ENCODE measurements at regions of chr6 and their contacts with region 1.

Region 1: DNA sequence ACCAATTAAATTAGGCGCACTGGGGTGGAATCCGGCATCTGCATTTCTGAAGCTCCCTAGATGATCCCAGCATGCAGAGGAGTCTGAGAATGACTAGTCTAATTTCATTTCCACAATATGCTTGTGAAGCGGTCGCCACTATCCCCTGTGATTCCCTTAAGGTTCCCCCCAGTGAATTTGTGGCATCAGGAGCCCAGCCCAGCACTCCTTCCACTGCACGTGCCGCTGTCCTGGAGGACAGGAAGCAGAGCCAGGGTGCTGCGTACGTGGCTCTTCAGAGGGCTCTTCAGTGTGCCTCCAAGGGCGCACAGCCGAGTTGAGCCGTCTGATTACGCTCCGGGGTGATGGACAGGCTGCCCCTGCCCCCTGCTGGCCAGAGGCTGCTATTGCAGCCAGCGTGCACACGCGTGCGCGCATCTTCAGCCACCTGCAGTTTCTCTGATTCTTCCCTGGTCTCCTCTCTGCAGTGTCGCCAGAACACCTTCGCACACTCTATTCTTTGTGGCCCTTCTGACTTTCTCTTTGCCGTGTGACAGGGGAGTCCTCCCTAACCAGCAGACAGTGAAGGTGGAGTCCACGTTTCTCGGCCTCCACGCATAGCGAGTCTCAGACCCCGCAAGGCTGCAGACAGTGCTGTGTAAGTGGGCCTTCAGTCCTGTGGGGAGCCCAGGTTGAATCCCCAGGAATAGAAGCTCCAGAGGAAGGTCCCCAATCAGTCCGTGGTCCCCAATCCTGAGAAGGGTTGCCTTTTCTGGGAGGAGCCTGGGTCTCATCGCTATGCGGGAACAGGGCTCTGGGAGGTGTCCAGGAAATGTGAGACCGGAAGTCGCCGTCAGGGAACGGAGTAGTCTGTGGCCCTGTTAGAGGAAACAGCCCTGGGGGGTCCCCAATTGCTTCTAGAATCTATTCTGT is 16.5 kb upstream of the NCR2 start:
- DNase-seq: peak; percentile 69 to 88 (median 83)
- ATAC-seq: peak; percentile 100
- H3K4me3 ChIP-seq: peak overlapping the region; percentile 6
- H3K4me3 Mint-ChIP-seq: peak overlapping the region; percentile 55 to 80 (median 74)
- H3K27ac ChIP-seq: no peak overlapping the region
- H3K27ac Mint-ChIP-seq: peak overlapping the region in 7 of 9 donors; percentile 39 to 79 (median 70)
- H3K4me1 ChIP-seq: peaks cover 3 to 9% of the 10 kb centered on the region in 2 donors
- H3K4me1 Mint-ChIP-seq: peaks cover 0 to 24% (median 15%) of the 10 kb centered on the region in 7 donors
- H3K27me3 ChIP-seq: peaks cover 0 to 3% of the 10 kb centered on the region in 2 donors
- H3K27me3 Mint-ChIP-seq: peaks cover 0 to 48% (median 10%) of the 10 kb centered on the region in 5 donors

Region 2: DNA sequence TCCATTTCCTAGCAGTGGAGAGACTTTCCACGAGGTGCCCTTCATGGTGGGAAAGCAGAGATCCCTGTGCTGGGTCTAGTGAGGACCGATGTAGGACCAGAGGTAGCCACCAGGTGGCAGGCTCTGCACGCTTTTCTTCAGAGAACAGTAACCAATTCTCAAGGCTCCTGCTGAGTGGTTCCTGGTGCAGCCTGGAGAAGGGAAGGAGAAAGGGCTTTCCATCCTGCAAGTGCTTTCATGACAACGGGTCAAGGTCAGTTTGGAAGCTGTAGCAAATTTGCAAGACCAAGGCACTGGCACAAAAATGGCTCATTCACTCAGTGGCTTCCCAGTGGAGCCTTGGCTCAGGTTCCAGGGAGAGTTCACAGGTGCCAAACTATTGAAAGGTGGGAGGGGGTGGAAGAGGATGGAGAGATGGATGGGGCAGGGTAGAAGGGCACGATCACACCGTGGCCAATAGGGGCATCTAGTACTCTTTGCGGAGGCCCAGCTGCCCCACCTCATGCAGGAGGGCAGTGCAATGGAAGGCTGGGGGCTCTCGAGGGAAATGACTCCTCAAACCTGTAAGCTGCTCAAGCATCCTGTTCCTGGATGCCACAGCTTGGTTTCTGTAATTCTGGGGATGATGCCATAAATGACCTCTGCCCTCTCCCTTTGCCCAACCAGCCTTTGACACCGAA is 1970.9 kb before region 1 on chr6:
- CTCF ChIA-PET with region 1: no interaction called
- POLR2A ChIA-PET with region 1: no interaction called
- intact Hi-C with region 1: loop called in 1 of 2 experiments (anchors 5 kb)
- DNase-seq: peak in 7 of 9 donors; percentile 16 to 63 (median 31)
- ATAC-seq: peak; percentile 75
- H3K4me3 ChIP-seq: no peak overlapping the region
- H3K4me3 Mint-ChIP-seq: no peak overlapping the region
- H3K27ac ChIP-seq: no peak overlapping the region
- H3K27ac Mint-ChIP-seq: peak overlapping the region in 2 of 9 donors; percentile 18 to 60
- H3K4me1 ChIP-seq: no peaks in the 10 kb centered on the region
- H3K4me1 Mint-ChIP-seq: peaks cover 0 to 4% (median 0%) of the 10 kb centered on the region in 7 donors
- H3K27me3 ChIP-seq: no peaks in the 10 kb centered on the region
- H3K27me3 Mint-ChIP-seq: peaks cover 0 to 5% (median 0%) of the 10 kb centered on the region in 5 donors

Region 3: GRCh38 chr6:41002216-41002615 is 316.7 kb before region 1 on chr6:
- CTCF ChIA-PET with region 1: interaction called, 3 read pairs
- POLR2A ChIA-PET with region 1: interaction called, 3 read pairs
- intact Hi-C with region 1: loop called (anchors 1 to 2 kb)
- DNase-seq: no peak
- ATAC-seq: no peak
- H3K4me3 ChIP-seq: no peak overlapping the region
- H3K4me3 Mint-ChIP-seq: no peak overlapping the region
- H3K27ac ChIP-seq: no peak overlapping the region
- H3K27ac Mint-ChIP-seq: no peak overlapping the region
- H3K4me1 ChIP-seq: no peaks in the 10 kb centered on the region
- H3K4me1 Mint-ChIP-seq: peaks cover 0 to 6% (median 4%) of the 10 kb centered on the region in 7 donors
- H3K27me3 ChIP-seq: no peaks in the 10 kb centered on the region
- H3K27me3 Mint-ChIP-seq: peaks cover 26 to 56% (median 28%) of the 10 kb centered on the region in 5 donors

Region 4: DNA sequence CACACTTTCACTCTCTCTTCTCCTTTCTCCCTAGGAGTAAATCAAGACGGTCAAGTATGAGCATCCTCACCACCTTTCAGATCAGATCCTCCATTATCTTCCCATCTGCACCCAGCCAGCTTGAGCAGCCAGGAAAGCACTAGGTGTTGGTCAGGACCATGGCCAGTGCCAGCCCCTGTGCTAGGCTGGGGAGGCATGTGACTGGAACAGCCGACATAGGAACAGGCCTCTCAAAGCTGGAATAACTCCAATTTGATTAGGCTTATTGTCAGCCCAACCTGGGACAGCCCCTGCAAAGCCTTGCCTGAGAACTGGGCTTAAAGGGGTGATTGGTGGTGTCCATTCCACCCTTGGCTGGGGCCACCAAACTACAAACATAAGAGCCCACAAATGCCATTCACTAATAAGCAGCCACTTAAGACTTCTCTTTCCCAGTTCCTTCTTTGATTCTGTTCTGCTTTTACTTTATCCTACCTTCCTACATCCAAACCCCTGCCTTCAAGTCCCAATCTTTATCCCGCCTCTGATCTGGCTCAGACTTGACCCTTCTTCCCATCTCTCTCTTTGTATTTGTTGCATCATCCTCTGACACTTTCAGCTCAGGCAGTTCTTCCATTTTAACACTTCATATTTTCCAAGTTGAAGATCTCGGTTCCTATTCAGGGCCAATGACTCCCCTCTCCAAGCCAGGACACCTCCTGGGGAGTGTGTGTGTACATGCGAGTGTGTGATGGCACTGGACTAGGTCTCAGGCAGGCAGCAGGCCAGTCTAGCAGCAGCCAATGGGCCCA is 151.5 kb before region 1 on chr6:
- CTCF ChIA-PET with region 1: no interaction called
- POLR2A ChIA-PET with region 1: no interaction called
- intact Hi-C with region 1: loop called in 1 of 2 experiments (anchors 2 kb)
- DNase-seq: no peak
- ATAC-seq: no peak
- H3K4me3 ChIP-seq: no peak overlapping the region
- H3K4me3 Mint-ChIP-seq: no peak overlapping the region
- H3K27ac ChIP-seq: no peak overlapping the region
- H3K27ac Mint-ChIP-seq: peak overlapping the region in 1 of 9 donors; percentile 57
- H3K4me1 ChIP-seq: no peaks in the 10 kb centered on the region
- H3K4me1 Mint-ChIP-seq: peaks cover 0 to 6% (median 0%) of the 10 kb centered on the region in 7 donors
- H3K27me3 ChIP-seq: no peaks in the 10 kb centered on the region
- H3K27me3 Mint-ChIP-seq: peaks cover 0 to 24% (median 0%) of the 10 kb centered on the region in 5 donors

Region 5: DNA sequence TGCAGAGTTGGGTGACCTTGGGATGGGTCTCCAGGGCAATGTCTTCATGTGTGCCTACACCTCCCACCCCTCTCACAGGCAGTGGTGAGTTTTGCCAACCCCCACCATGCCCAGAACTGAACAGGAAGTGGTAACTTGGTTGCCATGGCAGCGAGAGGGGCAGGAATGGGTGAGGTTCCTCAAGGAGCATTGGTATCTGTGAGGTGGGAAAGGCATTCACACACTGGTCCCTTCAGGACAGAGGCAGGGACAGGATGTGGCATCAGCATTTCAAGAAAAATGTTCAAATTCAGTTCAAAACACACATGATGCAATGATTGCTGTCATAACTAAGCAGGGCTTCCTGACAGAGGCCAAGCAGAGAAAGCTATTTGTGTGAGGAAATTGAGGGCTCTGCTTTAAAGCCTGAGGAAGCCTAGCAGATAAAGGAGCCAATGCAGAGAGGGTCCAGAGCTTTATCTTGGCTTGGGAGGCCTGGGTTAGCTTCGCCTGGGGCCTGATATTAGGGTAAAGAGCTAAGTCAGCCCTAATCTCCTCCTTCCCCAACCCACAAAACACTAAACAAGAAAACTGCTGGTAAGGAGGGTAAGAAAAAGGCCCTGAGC is 118.5 kb before region 1 on chr6:
- CTCF ChIA-PET with region 1: no interaction called
- POLR2A ChIA-PET with region 1: no interaction called
- intact Hi-C with region 1: loop called in 1 of 2 experiments (anchors 5 kb)
- DNase-seq: peak; percentile 34 to 87 (median 78)
- ATAC-seq: peak; percentile 79
- H3K4me3 ChIP-seq: peak overlapping the region; percentile 26
- H3K4me3 Mint-ChIP-seq: peak overlapping the region; percentile 76 to 84 (median 82)
- H3K27ac ChIP-seq: peak overlapping the region; percentile 88
- H3K27ac Mint-ChIP-seq: peak overlapping the region; percentile 95 to 100 (median 98)
- H3K4me1 ChIP-seq: peaks cover 47 to 55% of the 10 kb centered on the region in 2 donors
- H3K4me1 Mint-ChIP-seq: peaks cover 52 to 93% (median 83%) of the 10 kb centered on the region in 7 donors
- H3K27me3 ChIP-seq: no peaks in the 10 kb centered on the region
- H3K27me3 Mint-ChIP-seq: no peaks in the 10 kb centered on the region

Region 6: DNA sequence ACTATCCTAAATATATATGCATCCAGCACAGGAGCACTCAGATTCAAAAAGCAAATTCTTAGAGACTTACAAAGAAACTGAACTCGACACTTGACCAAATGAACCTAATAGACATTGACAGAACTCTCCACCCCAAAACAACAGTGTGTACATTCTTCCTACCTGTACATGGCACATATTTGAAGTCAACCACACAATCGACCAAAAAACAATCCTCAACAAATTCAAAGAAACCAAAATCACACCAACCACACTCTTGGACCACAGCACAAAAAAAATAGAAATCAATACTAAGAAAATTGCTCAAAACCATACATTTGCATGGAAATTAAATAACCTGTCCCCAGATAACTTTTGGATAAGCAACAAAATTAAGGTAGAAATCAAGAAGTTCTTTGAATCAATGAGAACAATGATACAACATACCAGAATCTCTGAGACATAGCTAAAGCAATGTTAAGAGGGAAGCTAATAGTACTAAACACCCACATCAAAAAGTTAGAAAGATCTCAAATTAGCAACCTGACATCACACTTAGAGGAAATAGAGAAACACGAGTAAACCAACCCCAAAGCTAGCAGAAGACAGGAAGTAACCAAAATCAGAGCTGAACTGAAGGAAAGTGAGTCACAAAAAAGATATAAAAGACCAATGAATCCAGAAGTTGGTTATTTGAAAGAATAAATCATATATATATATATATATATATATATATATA is 20.0 kb before region 1 on chr6:
- CTCF ChIA-PET with region 1: interaction called, 39 read pairs
- POLR2A ChIA-PET with region 1: interaction called, 3 read pairs
- intact Hi-C with region 1: loop called in 1 of 2 experiments (anchors 2 kb)
- DNase-seq: peak in 7 of 9 donors; percentile 60 to 85 (median 81)
- ATAC-seq: peak; percentile 94
- H3K4me3 ChIP-seq: peak overlapping the region; percentile 4
- H3K4me3 Mint-ChIP-seq: peak overlapping the region; percentile 56 to 91 (median 76)
- H3K27ac ChIP-seq: peak overlapping the region; percentile 22
- H3K27ac Mint-ChIP-seq: peak overlapping the region; percentile 80 to 98 (median 88)
- H3K4me1 ChIP-seq: peaks cover 18 to 21% of the 10 kb centered on the region in 2 donors
- H3K4me1 Mint-ChIP-seq: peaks cover 24 to 73% (median 57%) of the 10 kb centered on the region in 7 donors
- H3K27me3 ChIP-seq: no peaks in the 10 kb centered on the region
- H3K27me3 Mint-ChIP-seq: peaks cover 0 to 19% (median 0%) of the 10 kb centered on the region in 5 donors

Region 7: DNA sequence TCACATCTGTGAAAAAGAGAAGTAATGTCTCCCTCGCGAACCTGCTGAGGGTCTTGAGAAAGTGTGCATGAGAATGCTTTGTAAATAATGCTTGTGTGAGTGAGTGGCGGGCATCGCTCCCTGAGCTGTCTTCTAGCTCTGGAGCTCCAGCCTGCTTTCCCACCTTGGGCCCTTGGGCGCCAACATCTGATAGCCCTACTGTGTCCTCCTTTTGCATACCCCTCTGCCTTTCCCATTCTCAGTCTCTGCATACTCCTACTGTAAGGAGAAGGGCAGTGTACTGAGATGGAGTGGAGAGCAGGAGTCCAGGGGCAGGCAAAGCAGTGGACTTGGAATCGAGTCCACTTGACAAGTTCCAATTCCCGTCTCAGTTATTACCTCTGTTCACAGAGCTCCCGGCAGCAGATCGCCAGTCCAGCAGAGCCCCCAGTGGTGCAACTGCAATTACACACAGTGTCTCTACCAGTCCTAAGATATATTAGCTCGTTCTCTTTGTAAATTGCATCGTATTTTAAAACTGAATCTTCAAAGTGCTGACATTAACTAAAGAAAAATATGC is 15.7 kb after region 1 on chr6:
- CTCF ChIA-PET with region 1: interaction called, 11 read pairs
- POLR2A ChIA-PET with region 1: interaction called, 3 read pairs
- intact Hi-C with region 1: no loop called
- DNase-seq: no peak
- ATAC-seq: no peak
- H3K4me3 ChIP-seq: no peak overlapping the region
- H3K4me3 Mint-ChIP-seq: peak overlapping the region in 9 of 10 donors; percentile 16 to 79 (median 66)
- H3K27ac ChIP-seq: peak overlapping the region; percentile 57
- H3K27ac Mint-ChIP-seq: peak overlapping the region; percentile 83 to 96 (median 89)
- H3K4me1 ChIP-seq: peaks cover 31 to 43% of the 10 kb centered on the region in 2 donors
- H3K4me1 Mint-ChIP-seq: peaks cover 21 to 62% (median 51%) of the 10 kb centered on the region in 7 donors
- H3K27me3 ChIP-seq: no peaks in the 10 kb centered on the region
- H3K27me3 Mint-ChIP-seq: peaks cover 0 to 17% (median 0%) of the 10 kb centered on the region in 5 donors

Region 8: DNA sequence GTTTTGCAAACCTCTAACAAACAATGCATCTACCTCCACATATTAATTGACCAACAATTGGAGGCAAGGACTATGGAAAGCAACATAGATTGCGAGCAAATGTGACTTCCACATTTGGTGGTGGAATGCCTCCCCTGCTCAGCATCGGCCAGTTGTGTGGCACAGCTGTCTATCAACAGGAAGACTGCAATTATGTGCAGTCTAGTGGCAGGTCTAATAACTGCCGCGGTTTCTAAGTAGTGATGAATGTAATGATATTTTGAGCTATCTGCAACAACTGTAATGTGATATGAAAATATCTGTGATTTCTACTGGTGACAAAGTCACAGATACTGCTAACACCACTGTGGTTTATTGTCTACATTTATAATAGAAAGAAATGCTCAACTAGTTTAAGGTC is 73.3 kb after region 1 on chr6:
- CTCF ChIA-PET with region 1: no interaction called
- POLR2A ChIA-PET with region 1: no interaction called
- intact Hi-C with region 1: no loop called
- DNase-seq: no peak
- ATAC-seq: no peak
- H3K4me3 ChIP-seq: no peak overlapping the region
- H3K4me3 Mint-ChIP-seq: no peak overlapping the region
- H3K27ac ChIP-seq: no peak overlapping the region
- H3K27ac Mint-ChIP-seq: no peak overlapping the region
- H3K4me1 ChIP-seq: no peaks in the 10 kb centered on the region
- H3K4me1 Mint-ChIP-seq: no peaks in the 10 kb centered on the region
- H3K27me3 ChIP-seq: no peaks in the 10 kb centered on the region
- H3K27me3 Mint-ChIP-seq: peaks cover 10 to 56% (median 30%) of the 10 kb centered on the region in 5 donors